Sigmoid colon (tissue), 7 donors: ENCODE measurements at regions of chr17 and their contacts with region 1.

Region 1: GRCh38 chr17:7915611-7916382 is at the start of gene RNF227:
- DNase-seq: peak; percentile 98
- H3K4me3 ChIP-seq: peak within 1 kb of the TSS; percentile 44 to 59 (median 50)
- H3K27ac ChIP-seq: peak within 1 kb of the TSS; percentile 93 to 99 (median 96)
- H3K4me1 ChIP-seq: peaks cover 4 to 31% (median 21%) of the 10 kb centered on the region in 4 donors
- H3K27me3 ChIP-seq: no peaks in the 10 kb centered on the region
- CTCF ChIP-seq: no peak
- EP300 ChIP-seq: peak in 1 of 4 donors; percentile 7
- POLR2A ChIP-seq: no peak
- total RNA-seq, gene RNF227: 3.2 to 4.5 (median 4.2) TPM

Region 2: GRCh38 chr17:7887482-7888183 is 28.2 kb before region 1 on chr17:
- intact Hi-C with region 1: loop called (anchors 2 kb)
- DNase-seq: peak; percentile 98
- H3K4me3 ChIP-seq: peak overlapping the region in 3 of 4 donors; percentile 89 to 94 (median 89)
- H3K27ac ChIP-seq: peak overlapping the region; percentile 93 to 98 (median 95)
- H3K4me1 ChIP-seq: peaks cover 0 to 69% (median 56%) of the 10 kb centered on the region in 4 donors
- H3K27me3 ChIP-seq: no peaks in the 10 kb centered on the region
- CTCF ChIP-seq: no peak
- EP300 ChIP-seq: no peak
- POLR2A ChIP-seq: peak in 1 of 2 donors; percentile 51

Region 3: GRCh38 chr17:7931709-7932482 is 16.1 kb after region 1 on chr17 and contains the starts of genes CNTROB and TRAPPC1:
- intact Hi-C with region 1: loop called (anchors 2 kb)
- DNase-seq: peak; percentile 100
- H3K4me3 ChIP-seq: peak within 1 kb of the TSS; percentile 67 to 74 (median 72)
- H3K27ac ChIP-seq: peak within 1 kb of the TSS; percentile 83 to 87 (median 84)
- H3K4me1 ChIP-seq: peaks cover 0 to 61% (median 42%) of the 10 kb centered on the region in 4 donors
- H3K27me3 ChIP-seq: peaks cover 0 to 20% (median 9%) of the 10 kb centered on the region in 3 donors
- CTCF ChIP-seq: no peak
- EP300 ChIP-seq: no peak
- POLR2A ChIP-seq: peak; percentile 76 to 79
- total RNA-seq, gene CNTROB: 11.8 to 40.4 (median 30.0) TPM
- total RNA-seq, gene TRAPPC1: 33.5 to 66.5 (median 45.7) TPM

Region 4: GRCh38 chr17:7989781-7990655 is 74.2 kb after region 1 on chr17:
- intact Hi-C with region 1: loop called (anchors 1 kb)
- DNase-seq: peak; percentile 90
- H3K4me3 ChIP-seq: peak overlapping the region; percentile 33 to 59 (median 52)
- H3K27ac ChIP-seq: peak overlapping the region; percentile 9 to 62 (median 20)
- H3K4me1 ChIP-seq: peaks cover 0 to 12% (median 8%) of the 10 kb centered on the region in 4 donors
- H3K27me3 ChIP-seq: peaks cover 0 to 7% (median 0%) of the 10 kb centered on the region in 3 donors
- CTCF ChIP-seq: peak; percentile 90 to 98 (median 94)
- EP300 ChIP-seq: no peak
- POLR2A ChIP-seq: no peak

Region 5: DNA sequence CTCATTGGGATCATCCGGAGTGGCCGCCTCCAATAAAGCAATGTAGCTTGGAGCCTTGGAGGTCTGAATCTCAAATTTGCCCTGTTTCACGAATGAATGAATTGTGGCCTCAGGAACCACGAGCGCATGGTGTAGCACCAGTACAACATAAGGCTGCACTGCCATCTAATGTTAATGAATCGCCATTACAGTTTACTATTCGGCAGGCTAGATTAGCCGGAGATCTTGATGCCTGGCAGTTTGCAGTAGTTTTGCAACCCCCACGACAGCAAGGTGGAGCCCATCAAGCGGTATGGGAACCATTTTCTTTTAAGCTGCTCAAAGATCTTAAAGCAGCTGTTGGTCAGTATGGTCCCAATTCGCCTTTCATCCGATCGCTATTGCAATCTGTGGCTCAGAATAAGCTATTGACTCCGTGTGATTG is 141.9 kb after region 1 on chr17:
- intact Hi-C with region 1: loop called (anchors 10 kb)
- DNase-seq: peak; percentile 72
- H3K4me3 ChIP-seq: no peak overlapping the region
- H3K27ac ChIP-seq: no peak overlapping the region
- H3K4me1 ChIP-seq: peaks cover 0 to 9% (median 6%) of the 10 kb centered on the region in 4 donors
- H3K27me3 ChIP-seq: peaks cover 11 to 70% (median 49%) of the 10 kb centered on the region in 3 donors
- CTCF ChIP-seq: peak; percentile 50 to 72 (median 66)
- EP300 ChIP-seq: no peak
- POLR2A ChIP-seq: no peak